ENCODE measurements at regions of chrX and their contacts with region 1.

Region 1: DNA sequence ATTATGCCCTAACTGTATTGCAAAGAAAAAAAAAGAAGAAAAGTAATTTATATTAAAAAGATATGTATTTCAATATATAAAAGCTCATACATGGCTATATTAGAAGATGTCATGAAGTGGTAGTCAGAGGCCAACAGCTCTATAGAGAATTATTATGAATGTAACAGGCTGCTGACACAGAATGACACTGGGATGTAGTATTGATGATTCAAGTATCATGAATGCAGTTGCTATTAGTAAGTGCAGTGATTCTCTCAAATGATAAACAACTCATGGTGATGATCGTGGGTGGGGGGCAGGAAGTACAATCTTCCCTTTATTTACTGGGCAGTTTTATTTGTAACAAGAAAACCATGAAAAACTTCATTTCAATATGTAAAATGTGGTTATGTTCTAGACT is 124.6 kb downstream of the COL4A6 start:
- DNase-seq: no peak
- ATAC-seq: no peak
- H3K4me3 ChIP-seq: no peak overlapping the region
- H3K27ac ChIP-seq: no peak overlapping the region
- H3K4me1 ChIP-seq: no peaks in the 10 kb centered on the region
- H3K27me3 ChIP-seq: no peaks in the 10 kb centered on the region
- CTCF ChIP-seq: no peak

Region 2: DNA sequence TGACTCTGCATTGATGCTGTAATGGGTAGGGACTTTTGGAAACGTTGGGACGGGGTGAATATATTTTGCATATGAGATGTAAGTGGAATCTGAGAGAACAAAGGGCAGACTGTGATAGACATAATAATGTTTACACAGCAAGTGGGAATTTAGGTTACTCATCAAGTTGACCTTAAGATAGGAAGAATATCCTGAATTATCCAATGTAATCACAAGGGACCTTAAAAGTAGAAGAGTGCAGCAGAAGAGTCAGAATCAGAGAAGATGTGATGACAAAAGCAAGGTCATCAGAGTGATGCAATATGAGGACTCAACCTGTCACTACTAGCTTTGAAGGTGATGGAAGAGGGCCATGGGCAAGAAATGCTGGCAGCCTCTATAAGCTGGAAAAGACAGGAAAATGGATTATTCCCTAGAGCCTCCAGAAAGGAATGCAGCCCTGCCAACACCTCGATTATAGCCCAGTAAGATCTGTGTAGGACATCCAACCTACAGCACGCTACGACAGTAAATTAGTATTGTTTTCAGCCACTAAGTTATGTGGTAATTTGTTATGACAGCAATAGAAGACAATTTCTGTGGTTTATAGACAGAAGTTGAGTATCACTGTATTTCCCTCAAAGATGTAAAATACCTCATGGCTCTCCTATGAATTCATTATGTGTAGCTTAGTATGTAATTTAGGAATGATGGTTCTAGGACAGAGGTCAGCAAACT is 1340.1 kb before region 1 on chrX:
- CTCF ChIA-PET with region 1: no interaction called
- POLR2A ChIA-PET with region 1: no interaction called
- in situ Hi-C with region 1: no loop called
- intact Hi-C with region 1: no loop called
- DNase-seq: no peak
- ATAC-seq: no peak
- H3K4me3 ChIP-seq: no peak overlapping the region
- H3K27ac ChIP-seq: no peak overlapping the region
- H3K4me1 ChIP-seq: no peaks in the 10 kb centered on the region
- H3K27me3 ChIP-seq: no peaks in the 10 kb centered on the region
- CTCF ChIP-seq: no peak

Region 3: DNA sequence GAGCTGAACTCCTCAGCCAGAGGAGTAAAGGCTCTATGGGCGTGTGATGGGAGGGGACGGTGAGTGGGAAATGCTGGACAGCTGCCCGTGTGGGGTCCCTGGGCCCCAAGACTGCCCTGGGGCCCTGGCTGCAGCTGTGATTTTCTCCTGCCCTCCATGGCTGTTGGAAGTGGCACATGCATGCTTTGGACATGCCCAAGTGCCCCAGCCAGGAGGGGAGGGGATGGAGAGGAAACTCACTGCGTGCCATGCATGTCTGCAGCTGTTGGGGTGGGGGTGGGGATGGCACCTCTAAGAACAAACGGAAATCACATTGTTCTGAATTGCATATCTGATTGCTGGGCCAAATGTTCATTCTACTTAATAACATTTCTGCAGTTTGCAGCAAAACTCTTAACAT is 435.6 kb before region 1 on chrX:
- CTCF ChIA-PET with region 1: no interaction called
- POLR2A ChIA-PET with region 1: no interaction called
- in situ Hi-C with region 1: no loop called
- intact Hi-C with region 1: no loop called
- DNase-seq: no peak
- ATAC-seq: no peak
- H3K4me3 ChIP-seq: no peak overlapping the region
- H3K27ac ChIP-seq: no peak overlapping the region
- H3K4me1 ChIP-seq: no peaks in the 10 kb centered on the region
- H3K27me3 ChIP-seq: no peaks in the 10 kb centered on the region
- CTCF ChIP-seq: no peak

Region 4: DNA sequence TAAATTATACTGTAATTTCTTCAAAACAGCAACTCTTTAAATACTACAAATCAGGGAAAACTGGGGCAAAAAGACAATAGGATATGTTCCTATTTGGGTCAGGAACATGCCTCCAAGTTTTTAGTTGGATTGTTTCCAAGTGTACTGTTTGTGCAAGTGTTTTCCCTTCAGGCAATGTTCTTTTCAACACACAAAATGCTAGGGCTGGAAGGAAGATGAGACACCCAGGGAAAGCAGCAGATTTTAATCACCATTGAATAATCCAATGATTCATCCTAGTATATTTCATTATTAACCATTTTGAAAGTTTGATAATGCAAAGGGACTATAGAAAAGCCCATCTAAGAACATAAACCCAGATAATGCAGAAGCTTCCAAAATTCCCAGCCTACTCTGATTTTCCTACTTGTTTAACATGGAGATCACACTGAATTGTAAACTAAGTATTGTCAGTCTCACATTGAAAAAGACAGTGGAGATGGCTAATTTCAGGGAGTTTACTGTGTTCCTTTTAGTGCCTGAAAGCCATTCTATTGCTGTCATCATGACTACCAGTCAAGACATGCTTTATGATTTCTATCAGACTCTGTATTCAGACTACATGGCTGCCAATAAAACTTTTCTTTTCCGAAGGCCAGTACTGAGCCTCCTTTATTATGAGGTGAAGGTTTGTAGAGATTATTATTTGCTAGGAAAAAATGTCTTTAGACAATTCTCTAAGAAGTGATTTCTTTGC is 85.9 kb after region 1 on chrX:
- CTCF ChIA-PET with region 1: no interaction called
- POLR2A ChIA-PET with region 1: no interaction called
- in situ Hi-C with region 1: no loop called
- intact Hi-C with region 1: no loop called
- DNase-seq: no peak
- ATAC-seq: no peak
- H3K4me3 ChIP-seq: no peak overlapping the region
- H3K27ac ChIP-seq: no peak overlapping the region
- H3K4me1 ChIP-seq: no peaks in the 10 kb centered on the region
- H3K27me3 ChIP-seq: no peaks in the 10 kb centered on the region
- CTCF ChIP-seq: no peak

Region 5: DNA sequence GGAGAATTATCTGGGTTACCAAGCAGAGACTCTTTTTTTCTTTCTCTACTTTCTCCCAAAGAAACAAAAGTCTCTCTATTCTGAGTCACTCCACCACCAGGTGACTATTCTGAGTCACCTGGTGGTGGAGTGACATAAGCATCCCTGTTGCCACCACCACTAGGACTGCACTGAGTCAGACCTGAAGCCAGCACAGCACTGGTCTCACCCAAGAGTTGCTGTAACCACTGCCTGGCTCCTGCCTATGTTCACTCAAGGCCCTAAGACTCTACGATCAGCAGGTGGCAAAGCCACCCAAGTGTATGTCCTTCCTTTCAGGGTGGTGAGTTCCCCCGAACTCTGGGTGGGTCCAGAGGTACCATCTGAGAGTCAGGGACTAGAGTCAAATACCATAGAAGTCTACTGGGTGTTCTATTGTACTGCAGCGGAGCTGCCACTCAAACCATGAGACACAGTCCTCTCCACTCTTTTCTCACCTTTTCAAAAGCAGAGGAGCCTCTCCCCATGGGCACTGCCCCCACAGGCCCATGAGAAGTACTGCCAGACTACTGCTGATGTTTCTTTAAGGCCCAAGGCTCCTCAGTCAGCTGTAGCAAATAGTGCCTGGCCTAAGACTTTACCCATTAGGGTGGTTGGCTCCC is 632.3 kb after region 1 on chrX:
- CTCF ChIA-PET with region 1: no interaction called
- POLR2A ChIA-PET with region 1: no interaction called
- in situ Hi-C with region 1: no loop called
- intact Hi-C with region 1: no loop called
- DNase-seq: no peak
- ATAC-seq: no peak
- H3K4me3 ChIP-seq: no peak overlapping the region
- H3K27ac ChIP-seq: no peak overlapping the region
- H3K4me1 ChIP-seq: no peaks in the 10 kb centered on the region
- H3K27me3 ChIP-seq: no peaks in the 10 kb centered on the region
- CTCF ChIP-seq: no peak

Region 6: DNA sequence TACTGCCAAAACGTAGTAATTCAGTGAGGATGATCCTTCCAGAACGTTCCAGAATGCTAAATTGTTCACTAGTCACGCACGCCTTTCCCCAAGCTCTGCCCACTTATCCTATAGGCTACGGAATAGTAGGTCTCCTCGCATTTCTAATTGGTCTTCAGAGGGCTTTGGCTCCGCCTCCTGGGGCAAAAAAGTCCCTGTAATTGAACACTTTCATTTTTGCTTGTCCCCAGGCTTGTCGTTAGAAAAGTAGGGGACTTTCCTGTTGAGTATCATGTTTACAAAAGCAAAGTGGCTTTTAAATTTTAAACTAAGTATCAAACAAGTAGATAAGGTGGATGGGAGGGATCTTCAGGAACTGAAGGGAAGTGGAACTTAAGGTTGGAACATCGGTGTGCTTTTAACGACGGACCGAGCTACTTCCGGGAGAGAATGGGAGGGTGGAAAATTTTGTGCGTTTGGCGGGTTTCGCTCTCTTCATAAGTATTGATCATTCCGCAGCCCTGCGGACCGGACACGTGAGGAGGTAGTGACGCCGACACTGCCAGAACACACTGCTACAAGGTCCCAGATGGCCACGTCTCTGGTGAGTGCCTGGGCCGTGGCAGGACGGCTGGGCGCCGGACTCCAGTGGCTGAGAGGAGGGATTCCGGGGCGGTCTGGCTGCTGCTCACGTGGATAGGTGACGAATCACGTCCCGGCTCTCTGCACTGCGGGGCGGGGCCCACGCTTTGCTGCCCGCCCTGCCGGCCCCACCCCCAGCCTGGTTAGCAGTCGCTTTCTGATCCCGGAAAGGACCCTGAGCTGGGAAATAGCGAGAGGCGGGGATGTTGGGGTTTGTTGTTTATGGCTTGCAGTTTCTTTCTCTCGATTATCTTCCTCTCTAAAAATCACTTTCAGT is 1223.0 kb after region 1 on chrX and contains the start of gene NXT2:
- CTCF ChIA-PET with region 1: no interaction called
- POLR2A ChIA-PET with region 1: interaction called, 10 read pairs
- in situ Hi-C with region 1: no loop called
- intact Hi-C with region 1: no loop called
- DNase-seq: peak; percentile 93
- ATAC-seq: peak; percentile 100
- H3K4me3 ChIP-seq: peak within 1 kb of the TSS; percentile 63 to 69
- H3K27ac ChIP-seq: peak within 1 kb of the TSS; percentile 95
- H3K4me1 ChIP-seq: no peaks in the 10 kb centered on the region
- H3K27me3 ChIP-seq: peaks cover 2% of the 10 kb centered on the region; the same call in 1 of the 2 replicates
- CTCF ChIP-seq: no peak
- total RNA-seq, gene NXT2: 20.6 TPM